Right lobe of liver (tissue), 6 donors: ENCODE measurements at regions of chr14 and their contacts with region 1.

Region 1: GRCh38 chr14:93655078-93655750 is 133.1 kb downstream of the PRIMA1 start:
- DNase-seq: no peak
- ATAC-seq: peak; percentile 55 to 63 (median 58)
- H3K4me3 ChIP-seq: no peak overlapping the region
- H3K27ac ChIP-seq: no peak overlapping the region
- H3K4me1 ChIP-seq: no peaks in the 10 kb centered on the region
- H3K27me3 ChIP-seq: no peaks in the 10 kb centered on the region
- CTCF ChIP-seq: peak; percentile 54 to 70 (median 62)
- POLR2A ChIP-seq: no peak

Region 2: DNA sequence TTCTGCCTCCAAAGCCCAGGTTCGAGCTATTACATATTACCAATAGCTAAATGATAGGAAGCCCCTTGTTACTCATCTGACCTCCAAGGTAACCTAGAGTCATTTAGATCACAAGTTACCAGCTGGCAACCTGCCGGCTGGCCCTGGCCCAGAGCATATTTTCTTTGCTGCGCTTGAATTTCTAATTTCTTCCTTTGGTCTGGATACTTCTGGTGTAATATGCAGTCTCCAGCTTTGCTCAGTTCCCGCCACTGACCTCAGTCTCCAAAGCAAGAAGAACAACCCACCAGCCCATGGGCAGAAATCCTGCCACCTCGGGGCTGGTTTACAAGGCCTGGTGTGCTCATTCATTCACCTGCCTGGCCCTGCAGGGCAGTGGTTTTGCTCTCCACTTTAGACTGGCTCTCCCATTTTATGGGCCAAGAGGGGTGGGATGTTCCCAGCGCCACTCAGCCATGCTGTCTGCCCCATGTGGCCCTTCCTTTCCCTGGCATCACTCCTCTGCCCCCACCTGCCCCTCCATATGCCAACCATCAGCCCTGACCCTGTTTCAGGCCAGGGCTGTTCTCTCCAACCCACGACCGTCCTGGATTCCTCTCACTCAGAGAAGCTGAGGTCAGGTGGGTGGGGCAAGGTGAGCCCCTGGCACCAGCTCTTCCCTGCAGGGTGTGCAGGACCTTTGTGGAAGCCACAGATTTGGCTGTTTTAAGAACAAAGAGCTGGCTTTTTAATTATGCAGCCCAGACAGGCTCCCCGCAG is 57.0 kb after region 1 on chr14:
- intact Hi-C with region 1: no loop called
- DNase-seq: no peak
- ATAC-seq: no peak
- H3K4me3 ChIP-seq: no peak overlapping the region
- H3K27ac ChIP-seq: no peak overlapping the region
- H3K4me1 ChIP-seq: no peaks in the 10 kb centered on the region
- H3K27me3 ChIP-seq: no peaks in the 10 kb centered on the region
- CTCF ChIP-seq: no peak
- POLR2A ChIP-seq: no peak

Region 3: DNA sequence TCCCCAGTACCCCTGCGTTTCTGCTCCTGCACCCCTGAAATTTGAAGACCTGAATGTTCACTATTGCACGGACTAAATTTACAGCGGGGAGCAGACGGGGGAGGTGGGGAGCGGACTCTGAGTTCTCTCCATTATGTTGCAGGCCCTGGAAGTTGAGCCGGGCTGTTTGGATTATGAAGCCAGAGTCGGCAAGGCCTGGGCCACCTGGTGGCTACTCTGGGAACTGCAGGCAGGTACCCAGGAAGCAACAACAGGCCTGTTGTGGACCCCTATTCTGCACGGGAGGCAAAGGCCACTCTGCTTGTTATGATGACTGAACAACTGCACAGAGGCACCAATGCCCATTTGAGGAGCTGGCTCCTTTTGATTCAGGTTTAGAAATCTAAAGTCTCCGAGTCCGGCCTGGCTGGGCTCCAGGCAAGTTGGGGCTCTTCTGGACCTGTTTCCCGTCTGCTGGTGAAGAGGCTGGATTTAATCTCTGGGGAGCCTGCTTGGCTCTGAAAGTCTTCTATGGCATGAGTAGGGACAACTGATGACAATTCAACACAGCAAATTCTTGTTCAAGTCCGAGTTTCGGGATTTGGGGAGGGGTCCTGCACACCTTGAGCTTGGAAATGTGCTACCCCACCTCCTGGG is 237.8 kb after region 1 on chr14:
- intact Hi-C with region 1: loop called (anchors 5 to 10 kb)
- DNase-seq: peak; percentile 61 to 66 (median 65)
- ATAC-seq: peak; percentile 78 to 91 (median 85)
- H3K4me3 ChIP-seq: no peak overlapping the region
- H3K27ac ChIP-seq: no peak overlapping the region
- H3K4me1 ChIP-seq: no peaks in the 10 kb centered on the region
- H3K27me3 ChIP-seq: no peaks in the 10 kb centered on the region
- CTCF ChIP-seq: peak; percentile 91 to 98 (median 95)
- POLR2A ChIP-seq: no peak